ENCODE measurements at regions of chr6 and their contacts with region 1.

Region 1: DNA sequence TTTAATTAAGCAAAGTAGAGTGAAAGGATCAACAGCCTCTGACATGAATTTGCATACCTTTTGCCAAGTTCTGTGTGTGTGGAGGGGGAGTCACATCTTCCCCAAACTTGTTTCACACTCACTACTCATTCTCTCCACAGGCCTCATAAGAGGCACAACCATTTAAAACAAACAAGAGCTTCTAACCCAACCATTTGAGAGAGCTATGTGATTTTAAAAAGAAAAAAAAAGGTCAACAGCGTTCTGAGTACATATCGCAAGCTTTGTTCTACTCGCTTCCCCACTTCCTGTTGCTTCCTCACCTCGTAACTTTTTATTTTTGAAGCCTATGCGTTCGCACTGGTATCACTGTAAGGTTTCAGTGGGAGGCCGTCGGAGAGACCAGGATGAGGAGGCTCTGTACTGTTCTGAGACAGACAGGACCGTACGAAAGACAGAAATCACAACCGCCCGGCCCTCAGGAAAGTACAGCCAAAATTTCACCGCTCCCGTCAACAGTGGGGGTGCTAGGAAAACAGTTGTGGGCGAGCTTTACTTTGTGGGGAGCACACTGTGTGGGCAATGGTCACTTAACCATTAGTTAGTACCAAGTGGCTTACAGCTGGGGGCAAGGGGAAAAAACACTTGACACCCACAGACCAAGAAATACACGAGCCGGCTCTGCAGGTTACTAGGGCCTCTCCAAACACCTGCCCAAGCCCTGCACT is 61.3 kb downstream of the TRERF1 start:
- DNase-seq: no peak
- H3K4me3 ChIP-seq: no peak overlapping the region
- CTCF ChIP-seq: no peak
- POLR2A ChIP-seq: no peak

Region 2: GRCh38 chr6:42841844-42842584 is 451.6 kb after region 1 on chr6:
- intact Hi-C with region 1: loop called (anchors 5 kb)
- DNase-seq: no peak
- H3K4me3 ChIP-seq: no peak overlapping the region
- CTCF ChIP-seq: no peak
- POLR2A ChIP-seq: no peak

Measured in lower leg skin (tissue), 4 donors.